Activated naive CD4-positive, alpha-beta T cell treated with anti-CD3 and anti-CD28 coated beads for 36 hours (primary cell): ENCODE measurements at regions of chr4 and their contacts with region 1.

Region 1: DNA sequence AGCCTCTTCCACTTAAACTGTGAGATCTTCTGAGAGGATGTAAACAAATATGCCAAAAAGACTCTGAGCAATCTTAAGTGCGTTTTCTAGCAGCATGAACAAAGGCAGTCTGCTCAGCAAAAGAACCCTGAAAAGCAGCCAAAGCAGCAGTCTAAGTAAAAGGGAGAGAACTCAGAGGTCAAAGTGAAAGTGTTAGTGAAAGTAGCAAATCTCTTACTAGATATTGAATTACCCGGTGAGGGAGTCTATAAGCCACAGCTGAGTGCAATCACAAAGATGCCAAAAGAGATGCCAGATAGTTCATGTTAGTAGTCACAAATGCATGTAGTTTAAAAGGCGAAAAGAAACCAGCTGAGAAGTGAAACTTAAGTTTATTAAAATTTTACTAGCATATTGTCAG is 7.9 kb upstream of the GNRHR start:
- DNase-seq: peak; percentile 11
- H3K4me3 Mint-ChIP-seq: no peak overlapping the region
- H3K27ac Mint-ChIP-seq: no peak overlapping the region
- H3K4me1 Mint-ChIP-seq: peaks cover 4% of the 10 kb centered on the region
- H3K27me3 Mint-ChIP-seq: no peaks in the 10 kb centered on the region

Region 2: GRCh38 chr4:67809502-67809901 is 47.4 kb after region 1 on chr4:
- CTCF ChIA-PET with region 1: no interaction called
- intact Hi-C with region 1: no loop called
- DNase-seq: no peak
- H3K4me3 Mint-ChIP-seq: no peak overlapping the region
- H3K27ac Mint-ChIP-seq: no peak overlapping the region
- H3K4me1 Mint-ChIP-seq: no peaks in the 10 kb centered on the region
- H3K27me3 Mint-ChIP-seq: peaks cover 2% of the 10 kb centered on the region

Region 3: DNA sequence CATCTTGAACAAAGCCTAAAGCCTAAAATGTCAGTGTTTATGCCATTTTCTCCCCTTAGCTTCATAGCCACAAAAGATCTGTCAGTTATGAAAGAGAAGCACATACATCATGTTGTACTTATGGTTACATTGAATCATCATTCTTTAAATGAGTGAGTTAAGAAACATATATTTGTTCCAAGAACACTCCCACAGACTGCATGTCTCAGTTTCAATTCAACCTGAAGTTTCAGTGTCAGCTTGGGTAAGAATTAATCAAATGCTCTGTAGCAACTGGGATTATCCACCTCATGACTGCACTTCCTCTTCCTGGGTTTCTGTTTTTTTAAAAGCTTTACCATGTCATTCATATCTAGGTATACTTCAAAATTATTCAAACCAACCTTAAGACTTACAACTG is 487.3 kb after region 1 on chr4:
- CTCF ChIA-PET with region 1: no interaction called
- intact Hi-C with region 1: loop called (anchors 5 kb)
- DNase-seq: peak; percentile 25
- H3K4me3 Mint-ChIP-seq: no peak overlapping the region
- H3K27ac Mint-ChIP-seq: peak overlapping the region; percentile 88
- H3K4me1 Mint-ChIP-seq: peaks cover 16% of the 10 kb centered on the region
- H3K27me3 Mint-ChIP-seq: peaks cover 7% of the 10 kb centered on the region